Activated naive CD4-positive, alpha-beta T cell treated with anti-CD3 and anti-CD28 coated beads for 36 hours (primary cell): ENCODE measurements at regions of chr10 and their contacts with region 1.

Region 1: DNA sequence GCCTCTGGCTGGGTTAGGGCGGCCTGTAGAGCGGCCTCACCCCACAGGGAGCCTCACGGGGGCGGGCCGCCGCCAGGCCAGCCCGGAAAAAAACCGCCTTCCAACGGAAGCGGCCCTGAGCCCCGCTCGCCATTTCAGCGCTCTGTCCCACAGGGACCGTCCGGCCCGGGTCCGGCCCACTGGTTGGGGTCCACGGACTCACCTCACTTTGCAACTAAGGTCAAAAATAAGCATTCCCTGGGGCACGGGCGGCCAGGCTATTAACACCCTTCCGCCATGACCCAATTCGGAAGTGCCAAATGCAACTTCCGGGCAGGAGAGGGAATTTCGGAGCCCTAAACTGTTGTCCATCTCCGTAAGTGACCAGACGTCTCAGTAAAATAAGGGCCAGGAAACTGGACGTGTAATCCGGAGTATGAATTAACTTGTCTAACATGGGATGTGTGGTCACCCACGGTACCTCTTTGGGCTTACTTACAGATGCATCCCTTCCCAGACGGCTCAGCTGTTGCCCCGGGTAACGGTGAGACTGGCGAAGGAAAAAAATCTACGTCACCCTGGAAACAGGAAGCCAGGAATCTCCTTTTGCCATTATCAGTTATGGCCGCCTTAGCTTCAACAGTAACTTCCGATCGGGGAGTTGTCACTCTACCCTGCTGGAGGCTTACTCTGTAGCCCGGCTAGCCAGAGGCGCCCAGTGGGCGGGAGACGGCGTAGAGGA is at the start of gene BBIP1:
- DNase-seq: no peak
- H3K4me3 Mint-ChIP-seq: peak within 1 kb of the TSS; percentile 97
- H3K27ac Mint-ChIP-seq: peak within 1 kb of the TSS; percentile 98
- H3K4me1 Mint-ChIP-seq: peaks cover 32% of the 10 kb centered on the region
- H3K27me3 Mint-ChIP-seq: no peaks in the 10 kb centered on the region
- total RNA-seq, gene BBIP1: 37.2 to 42.6 TPM

Region 2: DNA sequence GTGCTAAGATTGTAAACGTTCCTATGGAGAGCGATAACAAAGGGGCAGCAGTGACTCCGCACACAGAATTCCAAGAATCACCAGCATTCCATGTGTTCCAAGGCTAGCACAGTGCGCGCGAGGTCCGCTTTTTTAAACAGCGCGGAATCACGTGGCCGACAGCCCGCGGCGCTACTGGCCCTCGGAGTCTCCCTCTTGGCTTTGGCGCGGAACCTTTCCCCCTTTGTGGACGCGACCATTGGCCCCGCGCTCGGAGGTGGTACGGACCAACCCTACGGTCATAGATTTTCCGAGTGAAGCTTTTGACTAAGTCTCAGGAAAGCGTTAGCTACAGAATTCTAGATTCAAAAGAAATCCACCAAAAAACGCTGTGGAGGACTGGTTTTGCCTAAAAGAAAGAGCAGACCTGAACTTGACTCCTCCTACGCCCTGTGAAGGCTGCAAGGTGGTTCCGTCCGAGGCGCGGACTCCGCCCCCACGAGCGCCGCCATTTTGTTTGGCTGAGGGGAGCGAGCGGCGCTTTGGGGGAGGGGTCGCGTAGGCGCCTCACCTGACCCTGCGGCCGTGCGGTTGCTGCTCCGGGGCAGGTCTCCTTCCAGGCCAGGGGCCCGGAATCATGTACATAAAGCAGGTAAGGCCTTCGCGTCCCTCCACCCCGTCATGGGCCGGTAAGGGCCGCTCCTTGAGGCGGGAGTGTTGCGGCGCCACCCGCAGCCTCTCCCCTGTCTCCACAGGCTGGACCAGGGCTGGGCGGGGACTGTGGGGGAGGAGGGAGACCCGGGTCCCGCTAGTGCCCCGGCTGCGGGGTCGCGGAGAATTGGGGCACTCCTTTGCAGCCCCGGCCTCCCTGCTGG is 351.4 kb before region 1 on chr10 and contains the start of gene SMC3:
- CTCF ChIA-PET with region 1: no interaction called
- intact Hi-C with region 1: loop called (anchors 1 kb)
- DNase-seq: peak; percentile 95
- H3K4me3 Mint-ChIP-seq: peak within 1 kb of the TSS; percentile 87
- H3K27ac Mint-ChIP-seq: peak within 1 kb of the TSS; percentile 98
- H3K4me1 Mint-ChIP-seq: peaks cover 31% of the 10 kb centered on the region
- H3K27me3 Mint-ChIP-seq: peaks cover 5% of the 10 kb centered on the region
- total RNA-seq, gene SMC3: 81.3 to 85.0 TPM

Region 3: DNA sequence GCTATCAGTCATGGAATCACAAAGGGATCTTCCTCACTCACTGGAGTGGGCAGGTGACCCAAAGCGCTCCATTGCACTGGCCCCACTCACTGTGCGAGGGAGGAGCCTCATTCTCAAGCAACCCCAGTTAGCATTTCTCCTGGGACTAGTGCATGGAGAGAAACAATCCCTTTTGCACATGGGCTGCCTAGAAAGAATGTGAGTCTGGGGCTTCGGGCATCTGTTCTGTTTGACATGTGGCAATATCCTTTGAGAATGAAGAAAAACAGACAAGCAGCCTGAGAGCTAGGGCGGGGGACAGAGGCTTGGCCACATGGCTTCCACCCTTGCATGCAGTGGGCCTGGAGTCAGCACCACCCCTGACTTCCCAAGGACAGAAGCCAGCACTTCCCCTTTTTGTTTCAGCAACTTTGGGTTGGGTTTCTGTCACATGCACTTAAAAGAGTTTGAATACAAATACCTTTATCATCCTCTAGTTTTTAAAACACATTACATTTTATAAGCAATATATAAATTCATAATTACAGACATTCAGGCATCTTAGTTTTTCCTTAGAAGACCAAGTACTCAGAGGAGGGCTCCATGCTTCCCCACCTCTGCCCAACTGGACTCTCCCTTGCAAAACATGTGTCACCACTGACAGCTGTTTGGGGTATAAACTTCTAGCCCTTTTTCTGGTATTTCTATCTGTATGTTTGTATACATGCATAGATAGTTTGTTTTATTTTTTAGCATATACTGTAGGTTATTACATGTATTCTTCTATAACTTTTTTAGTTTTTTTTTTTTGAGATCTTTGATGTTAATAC is 200.8 kb before region 1 on chr10:
- CTCF ChIA-PET with region 1: no interaction called
- intact Hi-C with region 1: no loop called
- DNase-seq: no peak
- H3K4me3 Mint-ChIP-seq: no peak overlapping the region
- H3K27ac Mint-ChIP-seq: no peak overlapping the region
- H3K4me1 Mint-ChIP-seq: peaks cover 5% of the 10 kb centered on the region
- H3K27me3 Mint-ChIP-seq: no peaks in the 10 kb centered on the region

Region 4: GRCh38 chr10:110901954-110902819 is 16.6 kb before region 1 on chr10:
- CTCF ChIA-PET with region 1: interaction called, 6 read pairs
- intact Hi-C with region 1: loop called (anchors 1 kb)
- DNase-seq: peak; percentile 76
- H3K4me3 Mint-ChIP-seq: peak overlapping the region; percentile 17
- H3K27ac Mint-ChIP-seq: peak overlapping the region; percentile 74
- H3K4me1 Mint-ChIP-seq: peaks cover 44% of the 10 kb centered on the region
- H3K27me3 Mint-ChIP-seq: no peaks in the 10 kb centered on the region

Region 5: GRCh38 chr10:110993024-110993693 is 74.4 kb after region 1 on chr10:
- CTCF ChIA-PET with region 1: no interaction called
- intact Hi-C with region 1: loop called (anchors 1 kb)
- DNase-seq: peak; percentile 21
- H3K4me3 Mint-ChIP-seq: no peak overlapping the region
- H3K27ac Mint-ChIP-seq: no peak overlapping the region
- H3K4me1 Mint-ChIP-seq: peaks cover 23% of the 10 kb centered on the region
- H3K27me3 Mint-ChIP-seq: no peaks in the 10 kb centered on the region

Region 6: DNA sequence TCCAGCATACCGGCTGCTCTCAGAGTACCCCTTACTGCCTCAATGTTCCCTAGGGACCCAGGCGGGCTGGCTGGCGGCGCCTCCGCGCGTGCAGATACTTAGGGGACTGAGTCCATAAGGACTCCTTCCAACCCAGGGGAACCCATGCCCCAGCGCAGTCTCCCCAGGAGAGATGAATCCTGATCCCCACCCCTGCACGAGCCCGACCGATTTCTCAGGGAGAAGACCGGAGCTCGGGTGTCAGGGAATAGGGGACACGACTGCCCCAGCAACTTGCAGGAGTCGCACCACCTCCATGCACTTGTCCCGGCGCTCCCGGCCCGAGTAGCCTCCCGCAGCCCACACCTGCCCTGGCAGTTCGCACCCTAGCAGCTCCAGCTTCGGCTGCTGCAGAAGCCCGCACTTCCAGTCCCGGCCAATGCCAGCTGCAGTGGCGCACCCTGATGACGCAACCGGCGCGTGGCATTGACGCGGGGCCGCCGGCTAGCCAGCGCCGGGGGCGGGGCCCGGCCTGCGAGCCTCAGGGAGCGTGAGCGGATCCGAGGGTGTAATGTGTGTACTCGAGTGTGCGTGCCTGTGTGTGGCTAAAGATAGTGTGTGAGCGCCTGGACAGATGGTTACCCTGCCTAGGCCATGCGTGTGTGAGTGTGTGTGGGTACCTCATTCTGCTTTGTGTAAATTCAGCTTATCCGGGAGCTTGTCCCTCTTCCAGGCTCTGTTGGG is 1264.7 kb after region 1 on chr10 and contains the start of gene GPAM:
- CTCF ChIA-PET with region 1: no interaction called
- intact Hi-C with region 1: loop called (anchors 2 kb)
- DNase-seq: peak; percentile 97
- H3K4me3 Mint-ChIP-seq: peak within 1 kb of the TSS; percentile 85
- H3K27ac Mint-ChIP-seq: peak within 1 kb of the TSS; percentile 74
- H3K4me1 Mint-ChIP-seq: peaks cover 20% of the 10 kb centered on the region
- H3K27me3 Mint-ChIP-seq: no peaks in the 10 kb centered on the region
- total RNA-seq, gene GPAM: 7.3 to 8.1 TPM

Region 7: DNA sequence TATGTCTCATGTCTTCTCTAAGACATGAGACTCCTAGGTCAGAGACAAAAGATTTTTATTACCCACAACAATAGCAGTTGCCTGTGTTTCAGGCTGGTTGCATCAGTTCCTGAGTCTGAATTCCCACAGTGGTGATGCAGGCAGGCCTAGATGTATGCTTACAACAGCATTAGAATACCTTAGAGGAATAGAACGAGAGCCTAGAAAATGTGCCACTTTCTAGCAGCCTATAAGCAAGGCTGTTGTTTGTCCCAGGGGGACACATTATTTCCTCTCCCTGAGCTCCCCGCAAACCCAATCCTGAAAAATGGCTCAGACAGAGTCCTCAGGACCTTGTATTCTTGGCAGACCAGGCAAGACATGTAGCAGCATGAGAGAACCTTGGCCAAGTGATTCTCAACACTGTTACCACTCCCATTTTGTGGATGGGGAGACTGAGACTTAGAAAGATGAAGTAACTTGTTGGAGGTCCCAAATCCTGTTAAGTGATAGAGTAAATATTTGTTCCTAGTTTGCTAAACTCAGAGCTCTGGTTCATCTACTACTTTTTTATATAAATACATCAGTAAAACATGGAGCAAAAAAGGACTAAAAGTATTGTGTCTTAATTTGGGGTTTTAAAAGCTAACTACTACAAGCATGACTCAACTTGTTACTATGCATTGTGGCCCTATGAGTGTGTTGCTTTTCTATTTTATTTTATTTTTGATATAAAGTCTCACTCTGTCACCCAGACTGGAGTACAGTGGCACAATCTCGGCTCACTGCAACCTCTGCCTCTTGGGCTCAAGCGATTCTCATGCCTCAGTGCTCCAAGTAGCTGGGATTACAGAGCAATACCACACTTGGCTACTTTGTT is 1542.5 kb after region 1 on chr10:
- CTCF ChIA-PET with region 1: no interaction called
- intact Hi-C with region 1: loop called (anchors 10 kb)
- DNase-seq: peak; percentile 90
- H3K4me3 Mint-ChIP-seq: no peak overlapping the region
- H3K27ac Mint-ChIP-seq: peak overlapping the region; percentile 95
- H3K4me1 Mint-ChIP-seq: peaks cover 23% of the 10 kb centered on the region
- H3K27me3 Mint-ChIP-seq: no peaks in the 10 kb centered on the region